ENCODE measurements at regions of chr9 and their contacts with region 1.

Region 1: DNA sequence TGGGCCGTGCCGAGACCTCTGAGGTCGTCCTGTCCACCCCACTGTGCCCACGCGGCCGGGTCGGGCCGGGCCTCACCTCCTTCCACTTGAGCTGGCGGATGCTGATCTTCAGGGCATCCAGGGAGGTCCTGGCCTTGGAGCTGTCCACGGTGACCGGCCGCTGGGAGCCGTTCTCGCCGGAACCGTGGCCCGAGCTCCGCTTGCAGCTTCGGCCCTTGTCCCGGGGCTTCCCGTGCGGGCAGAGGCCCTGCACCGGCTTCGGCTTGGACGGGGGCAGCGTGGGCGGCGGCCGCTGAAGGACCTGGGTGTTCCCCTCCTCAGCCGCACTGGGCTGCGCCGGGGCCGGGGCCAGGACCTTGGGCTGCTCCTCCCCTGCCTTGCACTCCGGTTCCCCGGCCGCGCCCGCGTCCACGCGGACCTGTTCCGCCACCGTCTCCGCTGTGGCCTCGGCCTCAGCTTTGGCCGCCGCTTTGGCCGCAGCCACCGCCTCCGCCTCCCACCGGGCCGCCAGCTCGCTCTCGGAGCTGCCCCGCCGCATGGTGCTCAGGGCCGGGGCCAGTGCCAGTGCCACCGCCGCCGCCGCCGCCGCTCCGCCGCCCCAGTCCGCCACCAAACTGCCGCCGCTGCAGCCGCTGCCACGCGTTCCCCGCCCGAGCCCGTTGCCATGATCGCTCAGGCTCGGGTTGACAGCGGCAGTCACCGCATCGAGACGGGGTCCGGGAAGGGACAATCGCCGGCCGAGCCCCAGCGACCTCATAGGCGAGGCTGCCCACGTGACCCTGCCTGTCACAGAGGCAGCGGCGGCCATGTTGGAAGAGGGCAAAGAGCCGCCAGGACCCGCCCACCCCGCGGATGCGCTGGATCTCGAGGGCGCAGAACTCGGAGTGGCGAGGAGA is at the start of gene TTLL11:
- DNase-seq: peak; percentile 99
- H3K4me3 Mint-ChIP-seq: peak within 1 kb of the TSS; percentile 81
- H3K27ac Mint-ChIP-seq: peak within 1 kb of the TSS; percentile 82
- H3K4me1 Mint-ChIP-seq: peaks cover 34% of the 10 kb centered on the region
- H3K27me3 Mint-ChIP-seq: peaks cover 21% of the 10 kb centered on the region
- total RNA-seq, gene TTLL11: 2.4 and 2.8 TPM in 2 replicates

Region 2: GRCh38 chr9:121519046-121519445 is 573.8 kb before region 1 on chr9:
- intact Hi-C with region 1: no loop called
- DNase-seq: no peak
- H3K4me3 Mint-ChIP-seq: no peak overlapping the region
- H3K27ac Mint-ChIP-seq: no peak overlapping the region
- H3K4me1 Mint-ChIP-seq: no peaks in the 10 kb centered on the region
- H3K27me3 Mint-ChIP-seq: peaks cover 8% of the 10 kb centered on the region

Region 3: GRCh38 chr9:122051351-122052321 is 41.2 kb before region 1 on chr9:
- intact Hi-C with region 1: loop called (anchors 5 kb)
- DNase-seq: no peak
- H3K4me3 Mint-ChIP-seq: peak overlapping the region; percentile 12
- H3K27ac Mint-ChIP-seq: peak overlapping the region; percentile 71
- H3K4me1 Mint-ChIP-seq: peaks cover 7% of the 10 kb centered on the region
- H3K27me3 Mint-ChIP-seq: peaks cover 3% of the 10 kb centered on the region

Region 4: GRCh38 chr9:122144836-122145591 is 52.2 kb after region 1 on chr9:
- intact Hi-C with region 1: no loop called
- DNase-seq: no peak
- H3K4me3 Mint-ChIP-seq: no peak overlapping the region
- H3K27ac Mint-ChIP-seq: no peak overlapping the region
- H3K4me1 Mint-ChIP-seq: no peaks in the 10 kb centered on the region
- H3K27me3 Mint-ChIP-seq: no peaks in the 10 kb centered on the region

Region 5: DNA sequence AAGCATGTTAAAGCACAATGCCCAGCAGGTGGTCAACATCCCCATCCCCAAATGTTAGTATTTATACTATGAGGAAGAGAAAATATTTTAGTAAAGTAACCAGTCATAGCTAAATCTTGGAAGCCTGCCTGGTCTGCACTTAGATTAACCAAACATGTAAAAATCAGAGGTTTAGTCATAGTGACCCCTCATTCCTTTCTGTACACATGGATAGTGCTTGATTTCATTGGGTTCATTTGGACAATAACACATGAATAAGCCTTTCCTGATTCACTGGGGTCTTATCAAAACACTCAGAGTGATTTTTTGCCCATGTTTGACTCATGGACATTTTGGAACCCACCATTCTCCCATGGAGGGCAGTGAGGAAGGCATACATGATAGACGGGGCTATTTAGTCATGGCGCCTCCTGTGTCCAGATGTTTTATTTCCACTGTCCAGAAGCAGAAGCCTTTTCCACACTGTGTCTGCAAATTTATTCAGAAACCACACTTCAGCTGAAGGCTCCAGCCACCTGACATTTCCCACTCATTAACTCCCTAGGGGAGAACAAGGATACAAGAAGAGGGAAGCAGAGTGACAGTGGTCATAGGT is 352.4 kb after region 1 on chr9:
- intact Hi-C with region 1: no loop called
- DNase-seq: no peak
- H3K4me3 Mint-ChIP-seq: no peak overlapping the region
- H3K27ac Mint-ChIP-seq: no peak overlapping the region
- H3K4me1 Mint-ChIP-seq: no peaks in the 10 kb centered on the region
- H3K27me3 Mint-ChIP-seq: peaks cover 21% of the 10 kb centered on the region